AG04450 (cell line): ENCODE measurements at regions of chr2 and their contacts with region 1.

Region 1: DNA sequence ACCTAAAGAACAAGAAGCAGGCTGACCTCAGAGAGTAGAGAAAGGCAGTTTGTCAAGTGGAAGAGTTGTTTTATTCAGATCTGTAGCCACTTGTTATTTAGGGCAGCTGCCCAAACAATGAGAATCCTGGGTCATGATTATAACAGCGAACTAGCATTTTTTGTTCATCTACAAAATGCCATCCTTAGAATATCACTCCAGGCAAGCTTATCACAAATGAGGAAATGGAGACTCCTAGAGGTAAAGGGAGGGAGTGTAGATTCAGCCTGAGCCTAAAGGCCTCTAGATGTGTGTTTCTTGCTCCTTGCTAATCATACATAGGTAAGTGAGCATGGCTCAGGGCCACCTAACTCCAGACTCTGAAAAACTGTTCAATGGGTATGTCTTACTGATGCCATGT is 126.1 kb downstream of the HNMT start:
- DNase-seq: no peak
- H3K4me3 ChIP-seq: no peak overlapping the region
- H3K27ac ChIP-seq: no peak overlapping the region
- H3K27me3 ChIP-seq: no peaks in the 10 kb centered on the region
- CTCF ChIP-seq: peak; percentile 90

Region 2: GRCh38 chr2:137797641-137798040 is 292.7 kb before region 1 on chr2:
- CTCF ChIA-PET with region 1: no interaction called
- POLR2A ChIA-PET with region 1: no interaction called
- DNase-seq: no peak
- H3K4me3 ChIP-seq: no peak overlapping the region
- H3K27ac ChIP-seq: no peak overlapping the region
- H3K27me3 ChIP-seq: no peaks in the 10 kb centered on the region
- CTCF ChIP-seq: no peak

Region 3: DNA sequence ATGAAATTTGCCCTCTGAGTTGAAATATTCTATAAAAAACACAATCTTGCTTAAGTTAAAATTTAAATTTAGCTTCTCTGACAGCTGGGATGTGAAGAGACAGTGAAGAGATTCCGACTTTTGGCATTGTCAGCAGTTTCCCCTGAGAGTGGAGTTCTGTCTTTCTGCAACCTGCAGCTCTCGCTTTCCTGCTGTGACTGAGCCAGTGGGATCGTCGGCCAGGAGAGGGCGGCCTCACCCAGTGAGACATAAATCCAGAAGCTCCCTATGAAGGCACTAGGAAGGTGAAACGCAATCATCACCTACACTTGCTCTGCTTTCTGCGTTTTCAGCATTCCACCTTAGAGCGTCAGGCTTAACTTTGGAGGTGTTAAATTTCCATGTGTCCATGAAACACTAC is 201.5 kb before region 1 on chr2:
- CTCF ChIA-PET with region 1: interaction called, 10 read pairs
- POLR2A ChIA-PET with region 1: no interaction called
- DNase-seq: no peak
- H3K4me3 ChIP-seq: no peak overlapping the region
- H3K27ac ChIP-seq: no peak overlapping the region
- H3K27me3 ChIP-seq: no peaks in the 10 kb centered on the region
- CTCF ChIP-seq: peak; percentile 56

Region 4: DNA sequence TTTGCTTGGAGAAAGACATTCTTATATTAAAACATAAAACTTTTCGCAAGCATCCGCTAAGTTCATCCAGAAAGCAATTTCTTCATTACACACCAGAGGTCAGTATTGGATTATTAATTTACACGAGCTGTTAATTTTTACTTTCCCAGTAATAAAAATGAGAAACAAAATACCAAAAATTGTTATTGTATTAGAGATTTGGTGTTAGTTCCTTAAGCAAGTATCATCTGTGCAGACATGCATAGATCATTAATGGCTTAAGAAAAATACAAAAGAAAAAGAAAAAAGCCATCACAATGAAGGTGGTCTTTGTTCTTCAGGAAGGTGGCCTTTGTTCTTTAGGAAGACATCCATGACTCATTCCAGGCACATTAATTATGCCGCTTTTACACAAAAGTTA is 179.7 kb before region 1 on chr2:
- CTCF ChIA-PET with region 1: interaction called, 124 read pairs
- POLR2A ChIA-PET with region 1: interaction called, 9 read pairs
- DNase-seq: no peak
- H3K4me3 ChIP-seq: no peak overlapping the region
- H3K27ac ChIP-seq: no peak overlapping the region
- H3K27me3 ChIP-seq: no peaks in the 10 kb centered on the region
- CTCF ChIP-seq: peak; percentile 58

Region 5: GRCh38 chr2:137947728-137948336 is 142.5 kb before region 1 on chr2:
- CTCF ChIA-PET with region 1: interaction called, 37 read pairs
- POLR2A ChIA-PET with region 1: no interaction called
- DNase-seq: no peak
- H3K4me3 ChIP-seq: no peak overlapping the region
- H3K27ac ChIP-seq: no peak overlapping the region
- H3K27me3 ChIP-seq: no peaks in the 10 kb centered on the region
- CTCF ChIP-seq: peak; percentile 70

Region 6: GRCh38 chr2:138079976-138080375 is 10.4 kb before region 1 on chr2:
- CTCF ChIA-PET with region 1: interaction called, 16 read pairs
- POLR2A ChIA-PET with region 1: no interaction called
- DNase-seq: no peak
- H3K4me3 ChIP-seq: no peak overlapping the region
- H3K27ac ChIP-seq: no peak overlapping the region
- H3K27me3 ChIP-seq: no peaks in the 10 kb centered on the region
- CTCF ChIP-seq: no peak

Region 7: DNA sequence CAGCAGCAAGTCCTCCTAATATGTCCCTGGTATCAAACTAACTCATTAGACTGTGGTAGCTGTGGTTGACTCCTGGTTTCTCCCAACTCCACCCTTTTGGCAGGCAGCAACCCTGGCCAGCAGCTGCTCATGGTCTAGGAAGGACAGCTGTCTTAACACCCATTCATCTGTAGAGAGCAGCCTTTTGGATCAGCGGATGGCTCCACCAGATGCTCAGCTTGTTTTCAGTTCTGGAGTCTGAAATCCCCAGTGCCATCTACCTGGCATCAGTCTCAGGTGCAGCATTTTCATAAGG is 511.8 kb after region 1 on chr2:
- CTCF ChIA-PET with region 1: no interaction called
- POLR2A ChIA-PET with region 1: no interaction called
- DNase-seq: no peak
- H3K4me3 ChIP-seq: no peak overlapping the region
- H3K27ac ChIP-seq: no peak overlapping the region
- H3K27me3 ChIP-seq: no peaks in the 10 kb centered on the region
- CTCF ChIP-seq: no peak